ENCODE measurements at regions of chr2 and their contacts with region 1.

Region 1: DNA sequence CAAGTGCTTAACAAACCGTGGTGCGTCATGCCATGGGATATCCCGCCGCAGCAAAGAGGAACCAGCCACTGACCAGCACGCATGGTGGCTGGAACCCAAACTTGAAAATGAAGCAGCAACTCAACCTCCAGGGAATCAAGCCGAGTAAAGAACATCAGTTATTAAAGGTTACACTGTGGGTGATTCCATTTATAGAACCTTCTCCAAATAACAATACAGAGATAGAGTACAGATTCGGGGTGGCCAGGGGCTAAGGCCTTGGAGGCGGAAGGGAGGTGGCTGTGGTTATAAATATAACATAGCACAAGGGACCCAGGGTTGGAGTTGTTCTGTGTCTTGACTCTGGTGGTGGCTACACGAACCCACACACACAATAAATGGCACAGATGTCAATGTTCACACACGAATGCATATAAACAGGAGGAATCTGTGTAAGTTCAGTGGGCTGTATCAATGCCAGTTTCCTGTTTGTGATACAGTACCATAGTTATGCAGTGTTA is 123.1 kb downstream of the EIPR1 start:
- DNase-seq: peak; percentile 41
- ATAC-seq: peak; percentile 80
- H3K4me3 Mint-ChIP-seq: peak overlapping the region; percentile 68
- H3K27ac Mint-ChIP-seq: peak overlapping the region; percentile 89
- H3K4me1 Mint-ChIP-seq: peaks cover 63% of the 10 kb centered on the region
- H3K27me3 Mint-ChIP-seq: no peaks in the 10 kb centered on the region
- CTCF ChIP-seq: no peak

Region 2: DNA sequence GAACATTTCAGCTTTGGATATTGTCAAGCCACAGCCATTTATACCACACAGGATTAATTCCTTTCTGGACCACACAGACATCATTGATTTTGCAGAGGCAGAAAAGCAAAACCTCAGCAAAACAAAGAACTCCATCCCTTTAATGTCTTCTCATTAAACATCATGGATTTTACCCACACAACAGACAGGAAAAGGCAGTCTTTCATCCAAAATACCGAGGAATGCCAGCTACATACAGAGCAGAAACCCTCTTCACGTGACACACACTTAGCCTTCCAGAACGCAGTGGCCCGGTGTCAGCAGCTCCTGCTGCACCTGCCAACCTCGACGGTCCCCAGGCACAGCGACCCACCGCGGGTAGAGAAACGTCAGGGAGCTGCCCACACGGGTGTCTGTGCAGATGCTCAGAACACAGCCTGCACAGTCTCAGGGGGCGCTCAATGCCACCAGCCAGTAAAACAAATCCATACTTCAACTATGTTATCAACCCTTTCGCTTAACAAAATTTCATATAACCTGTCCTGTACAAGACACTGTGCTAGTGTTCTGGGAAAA is 181.4 kb before region 1 on chr2:
- CTCF ChIA-PET with region 1: no interaction called
- POLR2A ChIA-PET with region 1: no interaction called
- intact Hi-C with region 1: no loop called
- DNase-seq: no peak
- ATAC-seq: no peak
- H3K4me3 Mint-ChIP-seq: no peak overlapping the region
- H3K27ac Mint-ChIP-seq: no peak overlapping the region
- H3K4me1 Mint-ChIP-seq: no peaks in the 10 kb centered on the region
- H3K27me3 Mint-ChIP-seq: peaks cover 1% of the 10 kb centered on the region
- CTCF ChIP-seq: no peak

Region 3: GRCh38 chr2:3151153-3151918 is 103.2 kb before region 1 on chr2:
- CTCF ChIA-PET with region 1: no interaction called
- POLR2A ChIA-PET with region 1: interaction called, 8 read pairs
- intact Hi-C with region 1: loop called (anchors 1 kb)
- DNase-seq: no peak
- ATAC-seq: peak; percentile 58
- H3K4me3 Mint-ChIP-seq: no peak overlapping the region
- H3K27ac Mint-ChIP-seq: peak overlapping the region; percentile 47
- H3K4me1 Mint-ChIP-seq: peaks cover 48% of the 10 kb centered on the region
- H3K27me3 Mint-ChIP-seq: no peaks in the 10 kb centered on the region
- CTCF ChIP-seq: no peak

Region 4: DNA sequence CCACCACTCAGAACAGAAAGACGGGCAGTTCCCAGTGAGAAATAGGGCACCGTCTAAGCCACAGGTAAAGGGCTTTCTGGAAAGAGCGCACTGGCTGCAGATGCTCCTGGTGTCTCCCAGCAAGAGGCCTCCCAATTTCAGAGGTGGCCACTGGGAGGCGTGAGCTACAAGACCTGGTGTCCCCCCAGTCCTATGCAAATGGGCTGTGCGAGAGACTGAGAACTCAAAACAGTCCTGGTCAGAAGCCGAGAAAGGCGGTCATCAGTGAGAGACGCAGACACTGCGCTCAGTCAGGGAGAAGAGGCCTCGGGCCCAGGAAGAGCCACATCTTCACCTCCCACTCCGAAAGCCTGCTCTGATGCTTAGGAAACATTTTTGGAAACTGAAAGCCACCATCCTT is 56.4 kb before region 1 on chr2:
- CTCF ChIA-PET with region 1: no interaction called
- POLR2A ChIA-PET with region 1: no interaction called
- intact Hi-C with region 1: loop called (anchors 10 kb)
- DNase-seq: no peak
- ATAC-seq: no peak
- H3K4me3 Mint-ChIP-seq: no peak overlapping the region
- H3K27ac Mint-ChIP-seq: no peak overlapping the region
- H3K4me1 Mint-ChIP-seq: no peaks in the 10 kb centered on the region
- H3K27me3 Mint-ChIP-seq: no peaks in the 10 kb centered on the region
- CTCF ChIP-seq: no peak

Region 5: GRCh38 chr2:3223080-3223923 is 31.2 kb before region 1 on chr2:
- CTCF ChIA-PET with region 1: no interaction called
- POLR2A ChIA-PET with region 1: interaction called, 15 read pairs
- intact Hi-C with region 1: loop called (anchors 1 kb)
- DNase-seq: no peak
- ATAC-seq: peak; percentile 89
- H3K4me3 Mint-ChIP-seq: peak overlapping the region; percentile 52
- H3K27ac Mint-ChIP-seq: peak overlapping the region; percentile 90
- H3K4me1 Mint-ChIP-seq: peaks cover 27% of the 10 kb centered on the region
- H3K27me3 Mint-ChIP-seq: no peaks in the 10 kb centered on the region
- CTCF ChIP-seq: no peak

Region 6: DNA sequence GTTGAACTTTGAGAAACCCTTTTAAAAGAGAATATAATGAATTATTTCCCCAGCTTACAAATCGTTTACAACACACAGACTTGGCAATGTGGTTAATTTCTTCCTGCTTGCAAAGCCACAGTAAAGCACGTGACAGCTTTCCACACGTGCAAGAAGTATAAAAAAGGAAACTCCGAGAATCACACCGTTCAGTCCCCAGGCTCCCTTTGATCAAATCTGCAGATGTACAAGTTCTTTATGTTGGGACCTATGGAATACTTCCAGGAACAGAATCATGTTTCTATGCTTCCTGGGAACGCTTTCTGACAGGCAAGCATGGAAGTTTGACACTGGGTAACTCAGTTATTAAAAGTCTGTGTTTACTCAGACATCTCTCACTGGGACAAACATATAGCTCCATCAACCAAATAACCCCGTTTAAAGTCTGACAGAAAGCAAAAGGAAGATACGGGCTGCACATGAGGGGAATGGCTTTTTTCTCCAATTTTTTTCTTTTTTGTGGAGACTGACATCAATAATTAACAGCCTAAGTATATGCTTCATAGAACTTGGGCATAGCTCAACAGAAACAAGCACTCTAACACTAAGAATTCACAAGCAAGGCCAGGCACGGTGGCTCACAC is 11.6 kb before region 1 on chr2:
- CTCF ChIA-PET with region 1: interaction called, 3 read pairs
- POLR2A ChIA-PET with region 1: interaction called, 17 read pairs
- intact Hi-C with region 1: loop called (anchors 1 kb)
- DNase-seq: no peak
- ATAC-seq: peak; percentile 78
- H3K4me3 Mint-ChIP-seq: peak overlapping the region; percentile 45
- H3K27ac Mint-ChIP-seq: peak overlapping the region; percentile 62
- H3K4me1 Mint-ChIP-seq: peaks cover 19% of the 10 kb centered on the region
- H3K27me3 Mint-ChIP-seq: no peaks in the 10 kb centered on the region
- CTCF ChIP-seq: no peak

Region 7: DNA sequence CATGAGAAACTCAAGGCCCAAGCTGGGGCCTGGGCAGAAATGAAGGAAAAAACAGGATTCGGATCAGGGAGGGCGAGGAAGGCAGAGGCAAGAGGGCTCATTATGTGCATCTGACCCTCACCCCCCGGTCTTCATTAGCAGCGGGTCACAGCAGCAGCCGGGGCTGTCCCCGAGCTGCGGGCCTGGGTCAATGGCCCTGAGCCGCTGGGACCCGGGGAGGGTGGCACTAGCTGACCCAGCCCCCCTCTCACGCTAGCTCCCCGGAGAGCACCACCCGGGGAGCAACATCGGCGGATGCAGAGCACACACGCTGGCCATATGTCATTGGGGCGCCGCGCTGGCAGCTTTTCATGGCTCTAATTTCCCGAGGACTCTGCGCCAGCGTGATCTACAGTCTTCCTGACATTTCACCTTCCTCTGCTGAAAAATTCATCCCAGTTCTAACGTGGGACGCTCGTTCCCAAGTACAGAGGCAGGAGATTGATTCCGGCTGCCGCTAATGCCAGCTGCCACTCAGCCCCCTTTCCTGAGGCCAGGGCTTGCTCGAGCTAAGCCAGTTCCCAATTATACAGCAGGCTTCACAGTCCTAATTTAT is 59.4 kb after region 1 on chr2:
- CTCF ChIA-PET with region 1: no interaction called
- POLR2A ChIA-PET with region 1: no interaction called
- intact Hi-C with region 1: no loop called
- DNase-seq: no peak
- ATAC-seq: no peak
- H3K4me3 Mint-ChIP-seq: no peak overlapping the region
- H3K27ac Mint-ChIP-seq: no peak overlapping the region
- H3K4me1 Mint-ChIP-seq: no peaks in the 10 kb centered on the region
- H3K27me3 Mint-ChIP-seq: no peaks in the 10 kb centered on the region
- CTCF ChIP-seq: no peak

Region 8: DNA sequence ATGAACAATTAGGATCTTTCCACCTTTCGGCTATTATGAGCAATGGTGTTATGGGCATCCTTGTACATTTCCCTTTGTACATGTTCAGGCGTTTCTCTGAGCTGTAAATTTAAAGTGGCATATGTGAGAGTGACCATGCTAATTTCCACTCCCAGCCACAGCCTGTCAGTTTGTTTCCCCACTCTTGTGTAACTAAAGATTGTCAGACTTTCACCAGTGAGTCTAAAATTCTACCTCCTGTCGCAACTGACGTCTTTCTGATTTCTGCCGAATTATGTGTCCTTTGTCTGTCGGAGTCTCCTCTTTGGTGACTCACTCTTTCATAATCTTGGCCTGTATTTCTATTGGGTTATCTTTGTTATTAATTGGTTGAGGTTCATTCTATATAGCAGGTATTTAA is 175.7 kb after region 1 on chr2:
- CTCF ChIA-PET with region 1: no interaction called
- POLR2A ChIA-PET with region 1: no interaction called
- intact Hi-C with region 1: no loop called
- DNase-seq: no peak
- ATAC-seq: no peak
- H3K4me3 Mint-ChIP-seq: no peak overlapping the region
- H3K27ac Mint-ChIP-seq: no peak overlapping the region
- H3K4me1 Mint-ChIP-seq: no peaks in the 10 kb centered on the region
- H3K27me3 Mint-ChIP-seq: no peaks in the 10 kb centered on the region
- CTCF ChIP-seq: no peak

Region 9: GRCh38 chr2:3986063-3986462 is 731.6 kb after region 1 on chr2:
- CTCF ChIA-PET with region 1: no interaction called
- POLR2A ChIA-PET with region 1: no interaction called
- intact Hi-C with region 1: no loop called
- DNase-seq: no peak
- ATAC-seq: no peak
- H3K4me3 Mint-ChIP-seq: no peak overlapping the region
- H3K27ac Mint-ChIP-seq: no peak overlapping the region
- H3K4me1 Mint-ChIP-seq: no peaks in the 10 kb centered on the region
- H3K27me3 Mint-ChIP-seq: no peaks in the 10 kb centered on the region
- CTCF ChIP-seq: no peak